Dorsolateral prefrontal cortex (tissue), 120 donors: ENCODE measurements at regions of chr1 and their contacts with region 1.

Region 1: GRCh38 chr1:213122514-213122929 is 71.5 kb downstream of the RPS6KC1 start:
- DNase-seq: no peak
- H3K4me3 ChIP-seq: no peak overlapping the region
- H3K27ac ChIP-seq: peak overlapping the region in 11 of 59 donors; percentile 4 to 50 (median 16)
- H3K27me3 ChIP-seq: no peaks in the 10 kb centered on the region
- CTCF ChIP-seq: peak; percentile 54 to 94 (median 75)

Region 2: GRCh38 chr1:213244664-213245091 is 122.2 kb after region 1 on chr1:
- intact Hi-C with region 1: loop called in 1 of 2 experiments (anchors 10 kb)
- DNase-seq: peak in 1 of 10 donors; percentile 49
- H3K4me3 ChIP-seq: no peak overlapping the region
- H3K27ac ChIP-seq: no peak overlapping the region
- H3K27me3 ChIP-seq: no peaks in the 10 kb centered on the region
- CTCF ChIP-seq: peak; percentile 72 to 96 (median 86)

Region 3: GRCh38 chr1:213374369-213374768 is 251.8 kb after region 1 on chr1:
- intact Hi-C with region 1: loop called in 1 of 2 experiments (anchors 10 kb)
- DNase-seq: peak in 9 of 10 donors; percentile 50 to 77 (median 68)
- H3K4me3 ChIP-seq: no peak overlapping the region
- H3K27ac ChIP-seq: no peak overlapping the region
- H3K27me3 ChIP-seq: no peaks in the 10 kb centered on the region
- CTCF ChIP-seq: peak; percentile 76 to 95 (median 86)